Naive thymus-derived CD4-positive, alpha-beta T cell (primary cell): ENCODE measurements at regions of chr7 and their contacts with region 1.

Region 1: DNA sequence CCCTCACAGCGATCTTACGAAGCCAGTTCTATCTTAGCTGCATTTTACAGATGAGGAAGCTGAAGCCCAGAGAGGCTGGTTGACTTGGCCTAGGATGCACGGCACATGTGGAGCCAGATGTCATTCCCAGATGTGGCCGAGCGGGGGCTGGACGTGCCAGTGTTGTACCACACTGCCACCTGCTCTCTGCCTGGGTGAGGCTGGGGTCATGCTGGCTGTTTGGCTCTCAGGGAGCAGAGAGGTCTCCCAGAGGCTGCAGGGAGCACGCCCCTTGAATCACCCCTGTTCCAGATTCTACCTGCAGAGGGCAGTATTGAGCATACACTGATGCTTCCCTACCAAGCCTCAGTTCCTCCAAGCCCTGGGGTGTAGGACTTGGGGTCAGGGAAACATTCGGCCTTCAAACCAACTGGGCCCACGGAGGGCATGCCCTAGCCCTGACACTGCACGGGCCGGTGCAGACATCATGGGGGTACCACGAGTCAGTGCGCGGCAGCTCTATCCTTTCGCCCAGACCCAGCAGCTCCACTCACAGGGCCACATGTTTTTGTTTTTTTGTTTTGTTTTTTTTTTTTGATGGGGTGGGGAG is 3.8 kb upstream of the GTF2IRD1 start:
- DNase-seq: peak; percentile 31 to 75 (median 60)
- ATAC-seq: peak; percentile 49
- H3K4me3 ChIP-seq: no peak overlapping the region
- H3K4me3 Mint-ChIP-seq: no peak overlapping the region
- H3K27ac ChIP-seq: no peak overlapping the region
- H3K27ac Mint-ChIP-seq: peak overlapping the region in 5 of 9 donors; percentile 40 to 84 (median 58)
- H3K4me1 ChIP-seq: peaks cover 0 to 5% of the 10 kb centered on the region in 2 donors
- H3K4me1 Mint-ChIP-seq: peaks cover 7 to 19% (median 14%) of the 10 kb centered on the region in 7 donors
- H3K27me3 ChIP-seq: no peaks in the 10 kb centered on the region
- H3K27me3 Mint-ChIP-seq: peaks cover 0 to 20% (median 0%) of the 10 kb centered on the region in 5 donors

Region 2: GRCh38 chr7:74254129-74254857 is 195.6 kb before region 1 on chr7 and contains the start of gene RFC2:
- CTCF ChIA-PET with region 1: no interaction called
- POLR2A ChIA-PET with region 1: no interaction called
- intact Hi-C with region 1: loop called (anchors 1 kb)
- DNase-seq: peak; percentile 92 to 100 (median 98)
- ATAC-seq: peak; percentile 99
- H3K4me3 ChIP-seq: peak within 1 kb of the TSS; percentile 93
- H3K4me3 Mint-ChIP-seq: peak within 1 kb of the TSS; percentile 90 to 97 (median 94)
- H3K27ac ChIP-seq: peak within 1 kb of the TSS; percentile 90
- H3K27ac Mint-ChIP-seq: peak within 1 kb of the TSS; percentile 92 to 97 (median 95)
- H3K4me1 ChIP-seq: peaks cover 6 to 8% of the 10 kb centered on the region in 2 donors
- H3K4me1 Mint-ChIP-seq: peaks cover 0 to 37% (median 27%) of the 10 kb centered on the region in 7 donors
- H3K27me3 ChIP-seq: no peaks in the 10 kb centered on the region
- H3K27me3 Mint-ChIP-seq: no peaks in the 10 kb centered on the region
- total RNA-seq, gene RFC2: 12.0 to 51.7 (median 15.2) TPM

Region 3: GRCh38 chr7:74479961-74480829 is 30.3 kb after region 1 on chr7:
- CTCF ChIA-PET with region 1: interaction called, 4 read pairs
- POLR2A ChIA-PET with region 1: no interaction called
- intact Hi-C with region 1: loop called in 1 of 2 experiments (anchors 2 kb)
- DNase-seq: no peak
- ATAC-seq: peak; percentile 57
- H3K4me3 ChIP-seq: no peak overlapping the region
- H3K4me3 Mint-ChIP-seq: no peak overlapping the region
- H3K27ac ChIP-seq: no peak overlapping the region
- H3K27ac Mint-ChIP-seq: no peak overlapping the region
- H3K4me1 ChIP-seq: no peaks in the 10 kb centered on the region
- H3K4me1 Mint-ChIP-seq: peaks cover 0 to 9% (median 0%) of the 10 kb centered on the region in 7 donors
- H3K27me3 ChIP-seq: no peaks in the 10 kb centered on the region
- H3K27me3 Mint-ChIP-seq: peaks cover 2 to 30% (median 12%) of the 10 kb centered on the region in 5 donors

Region 4: GRCh38 chr7:74569501-74570075 is 119.7 kb after region 1 on chr7:
- CTCF ChIA-PET with region 1: interaction called, 6 read pairs
- POLR2A ChIA-PET with region 1: no interaction called
- intact Hi-C with region 1: loop called (anchors 1 kb)
- DNase-seq: peak in 1 of 9 donors; percentile 2
- ATAC-seq: peak; percentile 28
- H3K4me3 ChIP-seq: no peak overlapping the region
- H3K4me3 Mint-ChIP-seq: peak overlapping the region in 4 of 10 donors; percentile 35 to 55 (median 48)
- H3K27ac ChIP-seq: no peak overlapping the region
- H3K27ac Mint-ChIP-seq: peak overlapping the region in 5 of 9 donors; percentile 42 to 80 (median 62)
- H3K4me1 ChIP-seq: no peaks in the 10 kb centered on the region
- H3K4me1 Mint-ChIP-seq: peaks cover 0 to 18% (median 4%) of the 10 kb centered on the region in 7 donors
- H3K27me3 ChIP-seq: no peaks in the 10 kb centered on the region
- H3K27me3 Mint-ChIP-seq: peaks cover 0 to 3% (median 0%) of the 10 kb centered on the region in 5 donors

Region 5: DNA sequence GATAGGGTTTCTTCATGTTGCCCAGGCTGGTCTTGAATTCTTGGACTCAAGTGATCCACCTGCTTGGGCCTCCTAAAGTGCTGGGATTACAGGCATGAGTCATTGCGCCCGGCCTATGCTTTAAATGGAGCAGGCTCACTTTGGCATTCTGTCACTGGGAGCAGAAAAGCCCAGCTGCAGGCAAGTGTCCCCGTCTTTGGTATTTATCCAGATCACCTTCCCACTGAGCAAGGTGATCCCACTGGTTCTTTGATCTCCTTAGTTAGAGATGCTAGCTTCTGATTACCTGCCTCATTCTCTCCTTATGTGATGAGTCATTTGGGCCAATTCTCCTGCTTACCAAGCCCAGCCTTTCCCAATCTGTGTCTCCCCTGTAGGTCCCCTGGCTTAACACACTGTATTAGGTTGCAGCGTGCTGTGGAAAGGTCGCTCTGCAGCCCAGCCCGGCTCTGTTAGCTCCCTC is 1081.5 kb after region 1 on chr7:
- CTCF ChIA-PET with region 1: no interaction called
- POLR2A ChIA-PET with region 1: no interaction called
- intact Hi-C with region 1: loop called in 1 of 2 experiments (anchors 5 kb)
- DNase-seq: no peak
- ATAC-seq: no peak
- H3K4me3 ChIP-seq: no peak overlapping the region
- H3K4me3 Mint-ChIP-seq: no peak overlapping the region
- H3K27ac ChIP-seq: no peak overlapping the region
- H3K27ac Mint-ChIP-seq: peak overlapping the region in 1 of 9 donors; percentile 47
- H3K4me1 ChIP-seq: peaks cover 2 to 8% of the 10 kb centered on the region in 2 donors
- H3K4me1 Mint-ChIP-seq: peaks cover 14 to 19% (median 15%) of the 10 kb centered on the region in 7 donors
- H3K27me3 ChIP-seq: no peaks in the 10 kb centered on the region
- H3K27me3 Mint-ChIP-seq: no peaks in the 10 kb centered on the region